ENCODE measurements at regions of chr6 and their contacts with region 1.

Region 1: DNA sequence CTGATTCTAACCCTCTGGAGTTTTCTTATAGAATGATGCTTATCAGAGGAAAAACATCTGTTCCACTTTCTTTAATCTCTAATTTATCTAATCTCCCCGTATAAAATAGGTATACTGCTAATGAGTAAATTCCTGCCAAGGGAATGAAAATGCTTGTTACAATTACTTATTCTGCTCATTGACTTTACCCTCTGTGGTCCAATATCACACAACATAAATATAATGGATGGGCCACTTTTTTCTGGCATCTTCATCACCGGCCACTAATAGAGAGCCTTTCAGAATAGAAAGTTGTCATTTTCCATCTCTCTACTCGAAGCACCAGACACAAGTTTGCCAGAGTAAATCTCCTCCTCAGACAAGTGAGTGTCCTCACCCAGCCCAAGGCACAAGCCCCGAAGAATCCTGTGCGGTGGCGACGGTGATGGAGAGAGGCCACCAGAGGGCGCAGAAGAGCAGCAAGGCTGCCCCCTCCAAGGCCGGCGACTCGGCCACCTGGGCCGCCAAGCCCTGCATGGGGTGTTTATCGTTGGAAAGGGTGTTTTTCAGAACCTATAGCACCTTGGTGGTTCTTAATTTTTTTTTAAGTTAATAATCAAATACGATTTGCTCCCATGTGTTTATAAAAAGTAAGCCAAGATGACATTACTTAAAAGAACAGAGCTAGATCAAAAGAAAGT is 212.9 kb upstream of the ARID1B start:
- DNase-seq: peak; percentile 80 to 86
- H3K4me3 ChIP-seq: no peak overlapping the region
- H3K27ac ChIP-seq: no peak overlapping the region
- H3K4me1 ChIP-seq: peaks cover 0 to 6% of the 10 kb centered on the region in 2 donors
- H3K27me3 ChIP-seq: no peaks in the 10 kb centered on the region
- CTCF ChIP-seq: peak; percentile 83 to 96 (median 88)
- POLR2A ChIP-seq: no peak

Region 2: GRCh38 chr6:156427345-156427744 is 136.9 kb before region 1 on chr6:
- intact Hi-C with region 1: no loop called
- DNase-seq: peak; percentile 13 to 38
- H3K4me3 ChIP-seq: no peak overlapping the region
- H3K27ac ChIP-seq: no peak overlapping the region
- H3K4me1 ChIP-seq: no peaks in the 10 kb centered on the region
- H3K27me3 ChIP-seq: no peaks in the 10 kb centered on the region
- CTCF ChIP-seq: no peak
- POLR2A ChIP-seq: no peak

Region 3: DNA sequence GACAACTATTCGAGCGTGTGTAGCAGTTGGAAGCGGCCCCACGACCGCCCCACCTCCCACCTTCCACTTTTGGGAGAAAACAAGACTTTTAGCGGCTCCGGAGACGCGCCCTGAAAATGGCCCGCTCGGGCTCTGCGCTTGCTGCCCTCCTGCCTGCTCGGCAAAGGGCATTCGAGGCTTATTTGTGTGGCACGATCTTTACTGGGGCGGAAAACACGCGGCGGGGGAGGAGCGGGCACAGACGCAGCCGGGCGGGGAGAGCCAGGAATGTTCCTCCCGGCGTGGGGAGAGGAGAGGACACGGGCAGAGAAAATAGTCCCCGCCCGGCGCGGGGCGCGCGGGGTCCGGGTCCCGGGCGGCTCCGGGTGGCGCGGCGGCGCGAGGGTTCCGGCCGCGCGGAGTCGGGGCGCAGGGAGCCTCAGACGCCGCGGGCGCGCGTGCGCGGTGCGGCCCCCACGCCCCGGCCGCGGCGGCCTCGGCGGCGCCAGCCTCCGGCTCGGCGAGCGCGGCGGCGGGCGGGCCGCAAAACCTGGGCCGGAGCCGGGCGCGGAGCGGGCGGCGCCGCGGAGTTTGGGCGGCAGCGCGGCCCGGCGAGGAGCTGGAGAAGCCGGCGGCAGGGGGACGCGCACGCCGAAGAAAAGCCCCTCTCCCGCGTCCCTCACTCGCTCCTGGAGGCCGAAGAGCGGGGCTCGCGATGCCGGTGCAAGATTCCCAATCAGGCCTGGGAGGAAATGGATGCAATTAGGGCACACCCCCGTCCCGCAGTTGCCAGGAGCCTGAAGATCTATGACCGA is 122.9 kb after region 1 on chr6:
- intact Hi-C with region 1: loop called (anchors 5 kb)
- DNase-seq: peak; percentile 96 to 97
- H3K4me3 ChIP-seq: peak overlapping the region; percentile 41 to 73 (median 50)
- H3K27ac ChIP-seq: peak overlapping the region; percentile 97 to 99 (median 99)
- H3K4me1 ChIP-seq: peaks cover 5 to 10% of the 10 kb centered on the region in 2 donors
- H3K27me3 ChIP-seq: no peaks in the 10 kb centered on the region
- CTCF ChIP-seq: peak in 1 of 6 experiments; percentile 2
- POLR2A ChIP-seq: peak; percentile 60 to 78

Region 4: GRCh38 chr6:157021344-157021992 is 457.2 kb after region 1 on chr6:
- intact Hi-C with region 1: loop called (anchors 10 kb)
- DNase-seq: peak; percentile 85 to 86
- H3K4me3 ChIP-seq: peak overlapping the region; percentile 53 to 99 (median 71)
- H3K27ac ChIP-seq: peak overlapping the region; percentile 95 to 100 (median 97)
- H3K4me1 ChIP-seq: peaks cover 34% of the 10 kb centered on the region in 2 donors
- H3K27me3 ChIP-seq: no peaks in the 10 kb centered on the region
- CTCF ChIP-seq: peak; percentile 10 to 41 (median 26)
- POLR2A ChIP-seq: peak in 1 of 2 donors; percentile 92

Region 5: DNA sequence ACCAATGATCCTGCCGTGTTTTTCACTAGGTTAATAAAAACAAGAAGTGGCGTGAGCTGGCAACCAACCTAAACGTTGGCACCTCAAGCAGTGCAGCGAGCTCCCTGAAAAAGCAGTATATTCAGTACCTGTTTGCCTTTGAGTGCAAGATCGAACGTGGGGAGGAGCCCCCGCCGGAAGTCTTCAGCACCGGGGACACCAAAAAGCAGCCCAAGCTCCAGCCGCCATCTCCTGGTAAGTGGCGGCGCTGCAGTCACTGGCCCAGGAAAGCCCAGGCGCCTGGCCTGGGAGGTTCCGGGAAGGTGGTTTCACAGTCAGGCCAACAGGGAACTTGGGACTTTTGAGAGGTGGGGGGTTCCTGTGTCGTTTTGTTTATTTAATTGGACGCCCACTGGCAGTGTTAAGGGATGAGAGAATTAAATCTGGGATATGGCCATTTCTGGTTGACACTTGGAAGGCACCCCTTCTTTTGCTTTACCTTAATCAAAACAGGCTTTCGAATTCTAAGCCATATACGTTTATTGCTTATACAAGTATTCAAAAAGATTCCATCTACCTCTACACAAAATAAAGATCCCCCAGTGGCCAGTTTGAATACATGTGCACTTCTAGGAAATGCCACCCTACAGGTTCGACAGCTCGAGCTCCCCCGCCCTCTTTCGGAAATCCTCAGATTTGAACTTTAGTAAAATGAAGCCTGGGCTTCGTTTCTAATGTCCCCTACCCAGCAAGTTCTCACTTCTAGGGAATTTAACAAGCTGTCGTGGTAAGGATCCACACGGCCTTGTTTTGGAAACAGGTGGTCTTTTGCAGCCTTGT is 620.1 kb after region 1 on chr6:
- intact Hi-C with region 1: loop called (anchors 5 kb)
- DNase-seq: peak; percentile 96 to 97
- H3K4me3 ChIP-seq: no peak overlapping the region
- H3K27ac ChIP-seq: peak overlapping the region in 1 of 3 donors; percentile 20
- H3K4me1 ChIP-seq: peaks cover 32 to 33% of the 10 kb centered on the region in 2 donors
- H3K27me3 ChIP-seq: no peaks in the 10 kb centered on the region
- CTCF ChIP-seq: peak; percentile 62 to 98 (median 96)
- POLR2A ChIP-seq: peak in 1 of 2 donors; percentile 25

Measured in thyroid gland (tissue), 4 donors.